Posterior cingulate gyrus (tissue), 11 donors: ENCODE measurements at regions of chr12 and their contacts with region 1.

Region 1: GRCh38 chr12:2783936-2784600 is 10.7 kb upstream of the FKBP4 start:
- DNase-seq: peak; percentile 45 to 96 (median 74)

Region 2: GRCh38 chr12:2739817-2740641 is 44.0 kb before region 1 on chr12:
- intact Hi-C with region 1: loop called (anchors 5 kb)
- DNase-seq: peak in 4 of 10 donors; percentile 35 to 90 (median 42)